Activated naive CD4-positive, alpha-beta T cell treated with anti-CD3 and anti-CD28 coated beads for 36 hours (primary cell): ENCODE measurements at regions of chr6 and their contacts with region 1.

Region 1: DNA sequence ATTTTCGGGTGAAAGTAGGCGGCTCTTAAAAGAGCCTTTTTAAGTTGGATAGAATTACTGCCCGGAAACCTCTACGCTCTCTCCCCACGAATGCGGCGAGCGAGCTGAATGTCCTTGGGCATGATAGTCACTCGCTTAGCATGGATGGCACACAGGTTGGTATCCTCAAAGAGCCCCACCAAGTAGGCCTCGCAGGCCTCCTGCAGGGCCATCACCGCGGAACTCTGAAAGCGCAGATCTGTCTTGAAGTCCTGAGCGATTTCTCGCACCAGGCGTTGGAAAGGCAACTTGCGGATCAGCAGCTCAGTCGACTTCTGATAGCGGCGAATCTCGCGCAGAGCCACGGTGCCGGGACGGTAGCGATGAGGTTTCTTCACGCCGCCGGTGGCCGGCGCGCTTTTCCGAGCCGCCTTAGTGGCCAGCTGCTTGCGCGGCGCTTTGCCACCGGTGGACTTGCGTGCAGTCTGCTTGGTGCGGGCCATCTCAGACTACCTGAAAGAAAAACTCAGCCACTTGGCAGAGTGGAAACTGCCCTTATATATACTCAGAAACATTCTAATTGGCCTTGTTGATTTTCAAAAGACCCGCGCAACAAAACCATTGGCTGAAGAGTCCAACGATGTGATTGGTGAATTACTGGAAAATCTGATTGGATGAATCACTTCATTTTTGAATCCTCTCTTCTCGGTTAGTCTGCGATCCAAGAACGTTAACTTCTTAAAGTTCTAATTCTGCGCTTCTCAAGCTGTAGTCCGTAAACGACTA is 93.9 kb upstream of the BTN3A2 start:
- DNase-seq: peak; percentile 92
- H3K4me3 Mint-ChIP-seq: no peak overlapping the region
- H3K27ac Mint-ChIP-seq: no peak overlapping the region
- H3K4me1 Mint-ChIP-seq: peaks cover 9% of the 10 kb centered on the region
- H3K27me3 Mint-ChIP-seq: peaks cover 5% of the 10 kb centered on the region

Region 2: GRCh38 chr6:26196846-26197648 is 74.0 kb before region 1 on chr6:
- CTCF ChIA-PET with region 1: no interaction called
- intact Hi-C with region 1: loop called (anchors 2 kb)
- DNase-seq: peak; percentile 86
- H3K4me3 Mint-ChIP-seq: peak overlapping the region; percentile 96
- H3K27ac Mint-ChIP-seq: peak overlapping the region; percentile 99
- H3K4me1 Mint-ChIP-seq: peaks cover 36% of the 10 kb centered on the region
- H3K27me3 Mint-ChIP-seq: peaks cover 5% of the 10 kb centered on the region

Region 3: DNA sequence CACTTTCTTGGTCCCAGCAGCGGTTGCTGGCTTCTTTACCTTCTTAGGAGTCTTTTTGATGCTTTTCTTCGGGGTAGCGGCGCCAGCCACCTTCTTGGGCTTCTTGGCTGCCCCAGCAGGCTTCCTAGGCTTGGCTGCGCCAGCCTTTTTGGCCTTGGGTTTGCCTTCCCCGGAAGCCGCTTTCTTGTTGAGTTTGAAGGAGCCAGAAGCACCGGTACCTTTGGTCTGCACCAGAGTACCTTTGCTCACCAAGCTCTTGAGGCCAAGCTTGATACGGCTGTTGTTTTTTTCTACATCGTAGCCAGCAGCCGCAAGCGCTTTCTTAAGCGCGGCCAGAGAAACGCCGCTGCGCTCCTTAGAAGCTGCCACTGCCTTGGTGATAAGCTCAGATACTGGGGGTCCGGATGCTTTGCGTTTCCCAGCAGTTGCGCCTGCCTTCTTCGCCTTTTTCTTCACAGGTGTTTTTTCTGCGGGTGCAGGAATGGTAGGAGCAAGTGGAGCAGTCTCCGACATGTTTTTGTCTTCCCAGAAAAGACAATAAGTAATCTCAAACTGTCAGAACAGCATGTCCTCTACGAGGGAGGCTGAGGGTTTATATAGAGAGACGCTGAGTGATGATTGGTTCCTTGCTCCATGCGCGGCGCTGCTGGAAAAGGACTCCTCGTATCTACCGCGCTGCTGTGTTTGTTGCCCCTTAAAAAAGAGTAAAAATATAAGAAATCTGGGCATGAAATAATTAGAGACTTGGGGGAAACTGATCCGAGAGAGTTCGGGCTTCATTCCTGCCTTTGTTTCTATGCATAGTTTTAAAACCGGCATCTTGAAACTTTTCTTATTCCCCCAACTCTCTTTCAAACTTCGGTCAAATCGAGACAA is 36.4 kb before region 1 on chr6:
- CTCF ChIA-PET with region 1: no interaction called
- intact Hi-C with region 1: loop called (anchors 1 kb)
- DNase-seq: peak; percentile 90
- H3K4me3 Mint-ChIP-seq: peak overlapping the region; percentile 83
- H3K27ac Mint-ChIP-seq: peak overlapping the region; percentile 100
- H3K4me1 Mint-ChIP-seq: peaks cover 28% of the 10 kb centered on the region
- H3K27me3 Mint-ChIP-seq: peaks cover 3% of the 10 kb centered on the region

Region 4: DNA sequence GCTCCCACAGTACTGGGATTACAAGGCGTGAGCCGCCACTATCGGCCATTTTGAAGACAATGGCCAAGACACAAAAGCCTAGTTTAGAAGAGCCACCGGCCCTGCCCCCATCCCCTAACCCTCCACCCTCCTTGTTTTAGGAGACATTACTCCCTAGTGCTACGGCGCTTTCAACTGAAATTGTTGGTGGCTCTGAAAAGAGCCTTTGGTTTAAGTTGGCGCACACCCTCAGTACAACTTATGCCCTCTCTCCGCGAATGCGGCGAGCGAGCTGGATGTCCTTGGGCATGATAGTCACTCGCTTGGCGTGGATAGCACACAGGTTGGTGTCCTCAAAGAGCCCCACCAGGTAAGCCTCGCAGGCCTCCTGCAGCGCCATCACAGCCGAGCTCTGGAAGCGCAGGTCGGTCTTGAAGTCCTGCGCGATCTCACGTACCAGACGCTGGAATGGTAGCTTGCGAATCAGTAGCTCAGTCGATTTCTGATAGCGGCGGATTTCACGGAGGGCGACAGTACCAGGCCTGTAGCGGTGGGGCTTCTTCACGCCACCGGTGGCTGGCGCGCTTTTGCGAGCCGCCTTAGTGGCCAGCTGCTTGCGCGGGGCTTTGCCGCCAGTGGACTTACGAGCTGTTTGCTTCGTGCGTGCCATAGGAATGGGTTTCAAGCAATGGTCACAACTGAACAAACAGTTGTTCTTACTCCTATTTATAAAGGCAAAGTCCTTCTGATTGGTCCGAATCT is 21.0 kb before region 1 on chr6:
- CTCF ChIA-PET with region 1: interaction called, 40 read pairs
- intact Hi-C with region 1: loop called (anchors 1 kb)
- DNase-seq: peak; percentile 82
- H3K4me3 Mint-ChIP-seq: peak overlapping the region; percentile 86
- H3K27ac Mint-ChIP-seq: peak overlapping the region; percentile 100
- H3K4me1 Mint-ChIP-seq: peaks cover 17% of the 10 kb centered on the region
- H3K27me3 Mint-ChIP-seq: no peaks in the 10 kb centered on the region

Region 5: DNA sequence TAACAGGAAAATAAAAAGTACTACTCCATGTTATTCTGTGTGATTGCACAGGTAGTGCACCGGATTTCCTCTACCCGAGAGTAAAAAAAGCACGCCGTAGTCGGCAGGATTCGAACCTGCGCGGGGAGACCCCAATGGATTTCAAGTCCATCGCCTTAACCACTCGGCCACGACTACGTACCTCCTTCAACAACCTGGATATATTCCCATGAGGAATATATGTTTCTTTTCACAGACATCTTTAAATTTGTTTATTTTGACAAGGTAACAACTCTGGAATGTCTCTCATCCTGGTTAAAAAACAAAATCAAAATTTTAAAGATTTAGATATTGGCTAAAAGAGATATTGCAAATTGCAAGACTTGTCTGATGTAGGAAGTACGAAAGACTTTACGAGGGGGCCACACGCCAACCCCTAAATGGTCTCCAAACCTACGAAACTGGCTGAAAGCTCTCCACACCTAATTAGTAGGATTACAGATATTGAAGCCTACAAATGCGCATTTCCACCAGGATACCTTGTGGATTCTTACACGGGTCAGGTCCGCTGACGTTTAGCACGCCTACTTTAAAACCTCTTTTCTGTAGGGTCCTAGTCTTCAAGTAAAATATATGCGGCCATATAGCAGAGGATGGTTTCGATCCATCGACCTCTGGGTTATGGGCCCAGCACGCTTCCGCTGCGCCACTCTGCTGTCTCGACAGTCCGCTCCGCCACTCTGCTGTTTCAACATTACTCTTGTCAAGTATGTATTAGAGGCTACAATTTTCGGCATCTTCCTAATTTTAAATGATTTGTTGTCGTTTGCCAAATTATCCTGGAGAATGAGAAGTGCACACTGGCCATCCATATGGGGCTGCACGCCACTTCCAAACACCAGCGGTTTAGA is 41.7 kb after region 1 on chr6:
- CTCF ChIA-PET with region 1: interaction called, 4 read pairs
- intact Hi-C with region 1: loop called (anchors 1 kb)
- DNase-seq: peak; percentile 95
- H3K4me3 Mint-ChIP-seq: peak overlapping the region; percentile 81
- H3K27ac Mint-ChIP-seq: peak overlapping the region; percentile 83
- H3K4me1 Mint-ChIP-seq: peaks cover 28% of the 10 kb centered on the region
- H3K27me3 Mint-ChIP-seq: no peaks in the 10 kb centered on the region